ENCODE measurements at regions of chr9 and their contacts with region 1.

Region 1: GRCh38 chr9:120755827-120756434 is 37.3 kb downstream of the FBXW2 start:
- H3K4me3 ChIP-seq: no peak overlapping the region
- H3K27ac ChIP-seq: no peak overlapping the region
- H3K4me1 ChIP-seq: no peaks in the 10 kb centered on the region
- CTCF ChIP-seq: peak; percentile 68

Region 2: GRCh38 chr9:120619751-120620655 is 135.9 kb before region 1 on chr9:
- CTCF ChIA-PET with region 1: interaction called, 14 read pairs
- POLR2A ChIA-PET with region 1: no interaction called
- H3K4me3 ChIP-seq: no peak overlapping the region
- H3K27ac ChIP-seq: no peak overlapping the region
- H3K4me1 ChIP-seq: peaks cover 3% of the 10 kb centered on the region; the same call in 1 of the 2 replicates
- CTCF ChIP-seq: 0 out of 2 replicates have a peak, but pooled peaks have one; percentile 27

Region 3: DNA sequence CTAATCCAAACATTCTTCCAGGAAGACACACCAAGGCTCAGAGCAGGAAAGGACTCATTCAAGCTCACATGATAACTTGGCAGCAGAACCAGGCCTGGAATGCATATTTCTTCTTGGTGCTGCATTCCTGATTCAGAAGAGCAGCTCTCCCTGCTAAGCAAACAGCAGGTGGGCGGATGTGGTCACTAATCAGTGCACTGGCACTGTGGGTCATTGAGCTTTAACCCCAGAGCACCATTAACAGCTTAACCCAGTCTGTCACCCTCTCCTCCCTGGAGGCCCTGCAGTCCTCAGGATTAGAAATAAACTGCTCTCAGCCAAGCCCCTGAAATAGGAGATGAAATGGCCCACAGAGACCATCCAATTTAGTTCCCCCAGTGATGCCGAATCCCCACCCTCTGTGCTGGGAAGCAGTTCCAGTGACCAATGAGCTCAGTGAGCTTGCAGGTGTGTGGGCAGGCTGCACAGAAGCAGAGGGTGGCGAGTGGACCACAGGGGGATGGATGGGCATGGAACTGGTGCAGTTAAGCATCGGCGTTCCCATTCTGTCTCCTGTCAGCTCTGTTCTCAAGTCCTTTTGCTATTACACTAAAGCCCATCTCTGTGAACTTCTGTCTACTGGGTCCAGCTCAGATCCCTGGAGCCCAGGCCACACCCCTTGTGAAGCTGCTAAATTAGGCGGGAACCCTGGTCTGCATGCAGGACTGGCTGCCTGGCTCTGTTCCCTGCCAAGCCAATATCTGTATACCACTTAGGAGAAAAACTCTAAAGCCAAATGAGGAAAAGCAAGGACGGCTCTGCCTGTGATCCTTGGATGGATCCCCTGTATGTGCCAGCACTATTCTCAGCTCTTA is 25.0 kb before region 1 on chr9:
- CTCF ChIA-PET with region 1: interaction called, 11 read pairs
- POLR2A ChIA-PET with region 1: no interaction called
- H3K4me3 ChIP-seq: no peak overlapping the region
- H3K27ac ChIP-seq: no peak overlapping the region
- H3K4me1 ChIP-seq: no peaks in the 10 kb centered on the region
- CTCF ChIP-seq: no peak

Region 4: DNA sequence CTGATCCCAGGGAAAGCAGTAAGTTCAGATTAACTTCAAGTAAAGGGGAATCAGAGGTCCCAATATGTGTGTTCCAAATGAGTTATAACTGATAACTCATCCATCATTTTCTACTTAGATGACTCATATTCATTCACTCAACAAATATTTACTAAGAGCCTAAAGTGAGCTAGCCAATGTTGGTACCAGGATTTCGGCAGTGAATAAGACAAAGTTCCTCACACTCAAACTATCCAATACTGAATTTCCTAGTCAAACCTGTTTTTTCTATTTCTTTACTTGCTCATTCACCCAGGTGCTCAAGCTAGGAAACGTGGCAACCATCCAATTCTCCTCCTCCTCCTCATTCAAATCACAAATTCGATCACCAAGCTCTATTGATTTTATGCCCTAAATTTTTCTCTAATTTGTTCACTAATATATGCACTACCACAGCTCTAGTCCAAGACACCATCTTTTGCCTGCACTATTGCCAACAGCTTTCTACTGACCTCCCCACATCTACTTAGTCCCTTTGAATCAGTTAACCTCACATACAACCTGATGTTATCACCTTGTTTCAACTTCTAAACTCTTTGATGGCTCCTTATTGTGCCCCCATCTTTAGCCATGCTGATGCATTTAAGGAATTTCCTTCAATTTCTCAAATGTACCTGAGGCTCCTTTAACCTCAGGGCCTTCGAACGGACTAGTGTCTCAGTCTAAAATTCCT is 11.7 kb after region 1 on chr9:
- CTCF ChIA-PET with region 1: interaction called, 40 read pairs
- POLR2A ChIA-PET with region 1: interaction called, 3 read pairs
- H3K4me3 ChIP-seq: no peak overlapping the region
- H3K27ac ChIP-seq: no peak overlapping the region
- H3K4me1 ChIP-seq: no peaks in the 10 kb centered on the region
- CTCF ChIP-seq: no peak

Region 5: DNA sequence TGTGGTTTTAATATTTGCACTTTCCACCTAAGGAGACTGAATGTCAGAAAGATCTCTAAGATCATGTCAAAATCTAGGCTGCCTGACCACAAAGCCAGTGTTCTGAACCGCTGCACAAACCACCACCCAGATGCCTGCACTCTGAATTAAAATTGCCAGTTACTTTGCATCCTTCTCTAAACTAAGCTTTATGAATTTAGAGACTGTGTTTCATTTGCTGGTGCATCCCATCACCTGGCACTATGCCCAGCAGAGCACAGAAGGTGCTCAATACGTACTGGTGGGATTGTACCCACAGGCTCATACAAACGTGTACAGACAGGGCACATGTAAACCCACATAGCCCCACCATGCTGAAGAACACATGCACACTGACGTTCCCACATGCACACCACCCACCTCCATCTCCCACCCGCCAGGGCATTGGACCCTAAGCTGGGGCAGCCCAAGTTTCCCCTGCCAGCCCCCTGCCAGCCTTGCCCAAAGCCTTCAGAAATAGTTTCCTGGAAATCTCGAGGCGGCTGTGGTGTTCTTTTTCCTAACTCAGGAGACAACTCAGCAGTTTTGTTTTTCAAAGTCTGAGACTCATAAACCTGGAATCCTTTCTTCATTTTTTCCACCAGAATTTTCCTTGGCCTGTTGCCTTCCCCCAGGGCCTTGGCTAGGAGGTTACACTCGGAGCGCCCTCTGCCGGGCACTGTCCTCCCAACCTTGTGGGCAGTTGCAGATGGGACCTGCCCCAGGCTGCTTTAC is 180.3 kb after region 1 on chr9:
- CTCF ChIA-PET with region 1: interaction called, 52 read pairs
- POLR2A ChIA-PET with region 1: no interaction called
- H3K4me3 ChIP-seq: no peak overlapping the region
- H3K27ac ChIP-seq: no peak overlapping the region; the same call in 1 of the 2 replicates
- H3K4me1 ChIP-seq: no peaks in the 10 kb centered on the region; the same call in 1 of the 2 replicates
- CTCF ChIP-seq: peak; percentile 51; the same call in 1 of the 2 replicates

Region 6: GRCh38 chr9:120985810-120986222 is 229.9 kb after region 1 on chr9:
- CTCF ChIA-PET with region 1: interaction called, 17 read pairs
- POLR2A ChIA-PET with region 1: no interaction called
- H3K4me3 ChIP-seq: no peak overlapping the region
- H3K27ac ChIP-seq: no peak overlapping the region
- H3K4me1 ChIP-seq: no peaks in the 10 kb centered on the region
- CTCF ChIP-seq: no peak; the same call in 1 of the 2 replicates

Region 7: DNA sequence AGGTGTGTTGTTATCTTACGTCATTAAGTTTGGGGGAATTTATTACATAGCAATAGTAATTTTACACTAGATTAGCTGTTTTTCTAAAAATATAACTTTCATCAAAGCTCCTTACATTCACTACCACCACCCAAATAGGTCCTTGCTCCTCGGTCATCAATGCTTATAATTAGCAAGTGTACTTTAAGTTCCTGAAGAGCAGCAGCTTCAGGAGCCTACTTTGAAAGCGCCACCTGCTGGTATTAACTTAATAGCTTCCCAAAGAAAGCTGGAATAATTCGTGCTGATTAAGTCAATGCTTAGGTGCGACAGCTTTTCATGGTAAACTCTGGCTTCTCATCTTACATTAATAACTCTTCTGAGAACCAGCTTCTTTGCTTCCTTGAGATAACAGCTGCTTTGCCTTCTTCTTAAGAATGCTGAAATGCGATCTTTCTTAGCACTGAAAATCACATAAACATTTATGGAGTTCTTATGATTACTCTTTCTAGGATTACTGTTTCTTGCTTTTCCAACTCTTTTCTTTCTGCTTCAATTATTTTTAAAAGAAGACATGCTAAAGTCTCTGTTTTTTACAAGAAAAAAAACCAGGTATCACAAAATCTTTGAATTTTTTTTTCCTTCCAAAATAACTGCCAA is 304.2 kb after region 1 on chr9:
- CTCF ChIA-PET with region 1: interaction called, 42 read pairs
- POLR2A ChIA-PET with region 1: no interaction called
- H3K4me3 ChIP-seq: no peak overlapping the region
- H3K27ac ChIP-seq: no peak overlapping the region
- H3K4me1 ChIP-seq: no peaks in the 10 kb centered on the region
- CTCF ChIP-seq: no peak